Endothelial cell of umbilical vein (primary cell): ENCODE measurements at regions of chr20 and their contacts with region 1.

Region 1: GRCh38 chr20:50189681-50190582 is 698 bp upstream of the CEBPB start:
- DNase-seq: peak; percentile 71
- H3K4me3 ChIP-seq: peak overlapping the region; percentile 24 to 60 (median 42)
- H3K27ac ChIP-seq: no peak overlapping the region
- H3K4me1 ChIP-seq: peaks cover 12% of the 10 kb centered on the region
- H3K27me3 ChIP-seq: peaks cover 0 to 2% of the 10 kb centered on the region in 2 experiments
- CTCF ChIP-seq: peak; percentile 54 to 88
- POLR2A ChIP-seq: no peak

Region 2: GRCh38 chr20:50110141-50110925 is 79.6 kb before region 1 on chr20:
- CTCF ChIA-PET with region 1: no interaction called
- POLR2A ChIA-PET with region 1: no interaction called
- dilution Hi-C with region 1: no loop called
- intact Hi-C with region 1: no loop called
- DNase-seq: peak; percentile 83
- H3K4me3 ChIP-seq: no peak overlapping the region
- H3K27ac ChIP-seq: peak overlapping the region; percentile 84
- H3K4me1 ChIP-seq: peaks cover 67% of the 10 kb centered on the region
- H3K27me3 ChIP-seq: no peaks in the 10 kb centered on the region
- CTCF ChIP-seq: no peak
- POLR2A ChIP-seq: no peak

Region 3: GRCh38 chr20:50200482-50201104 is 10.7 kb after region 1 on chr20:
- CTCF ChIA-PET with region 1: no interaction called
- POLR2A ChIA-PET with region 1: no interaction called
- dilution Hi-C with region 1: no loop called
- intact Hi-C with region 1: no loop called
- DNase-seq: no peak
- H3K4me3 ChIP-seq: no peak overlapping the region
- H3K27ac ChIP-seq: no peak overlapping the region
- H3K4me1 ChIP-seq: no peaks in the 10 kb centered on the region
- H3K27me3 ChIP-seq: no peaks in the 10 kb centered on the region
- CTCF ChIP-seq: no peak
- POLR2A ChIP-seq: no peak

Region 4: DNA sequence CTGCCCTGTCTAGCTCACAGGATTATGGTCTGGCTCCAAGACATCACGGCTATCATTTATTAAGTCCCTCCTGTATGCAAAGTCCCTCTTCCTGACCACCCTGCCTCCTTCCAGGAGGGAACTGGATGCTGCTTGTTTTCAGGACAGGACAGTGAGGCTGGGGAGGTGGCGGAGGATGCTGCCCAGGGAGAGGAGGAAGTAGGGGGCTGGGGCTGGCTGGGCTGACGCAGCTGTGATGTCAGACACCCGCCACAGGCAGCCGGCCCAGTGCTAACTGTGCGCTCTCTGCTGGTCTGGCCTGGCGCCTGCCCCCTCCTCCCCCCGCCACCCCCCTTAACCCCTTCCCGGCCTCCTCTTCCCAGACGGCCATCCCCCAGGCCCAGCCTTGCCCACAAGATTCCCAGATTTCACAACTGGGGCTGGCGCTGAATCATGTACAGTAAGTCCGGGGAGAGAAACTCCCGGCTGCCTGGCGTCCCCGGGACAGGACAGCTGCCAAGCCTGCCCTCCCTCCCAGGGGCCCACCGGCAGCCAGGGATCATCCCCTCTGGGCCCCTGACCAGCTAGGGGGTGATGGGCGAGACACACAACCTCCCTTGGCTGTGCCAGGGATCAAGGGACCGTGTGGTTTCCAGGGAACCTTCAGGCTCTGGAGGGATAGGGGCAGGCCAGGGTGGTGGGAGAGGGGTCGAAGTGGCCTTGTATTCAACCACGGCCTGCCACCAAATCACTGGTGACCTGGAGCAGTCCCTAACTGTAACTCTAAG is 118.8 kb after region 1 on chr20:
- CTCF ChIA-PET with region 1: interaction called, 4 read pairs
- POLR2A ChIA-PET with region 1: no interaction called
- dilution Hi-C with region 1: no loop called
- intact Hi-C with region 1: loop called (anchors 2 kb)
- DNase-seq: peak; percentile 52
- H3K4me3 ChIP-seq: peak overlapping the region in 1 of 3 experiments; percentile 20
- H3K27ac ChIP-seq: peak overlapping the region; percentile 85
- H3K4me1 ChIP-seq: peaks cover 14% of the 10 kb centered on the region
- H3K27me3 ChIP-seq: no peaks in the 10 kb centered on the region
- CTCF ChIP-seq: peak in 1 of 2 donors; percentile 13
- POLR2A ChIP-seq: no peak

Region 5: GRCh38 chr20:50379049-50379990 is 189.4 kb after region 1 on chr20:
- CTCF ChIA-PET with region 1: interaction called, 3 read pairs
- POLR2A ChIA-PET with region 1: no interaction called
- dilution Hi-C with region 1: no loop called
- intact Hi-C with region 1: loop called (anchors 2 kb)
- DNase-seq: peak; percentile 78
- H3K4me3 ChIP-seq: no peak overlapping the region
- H3K27ac ChIP-seq: no peak overlapping the region
- H3K4me1 ChIP-seq: peaks cover 24% of the 10 kb centered on the region
- H3K27me3 ChIP-seq: peaks cover 0 to 5% of the 10 kb centered on the region in 2 experiments
- CTCF ChIP-seq: no peak
- POLR2A ChIP-seq: no peak

Region 6: DNA sequence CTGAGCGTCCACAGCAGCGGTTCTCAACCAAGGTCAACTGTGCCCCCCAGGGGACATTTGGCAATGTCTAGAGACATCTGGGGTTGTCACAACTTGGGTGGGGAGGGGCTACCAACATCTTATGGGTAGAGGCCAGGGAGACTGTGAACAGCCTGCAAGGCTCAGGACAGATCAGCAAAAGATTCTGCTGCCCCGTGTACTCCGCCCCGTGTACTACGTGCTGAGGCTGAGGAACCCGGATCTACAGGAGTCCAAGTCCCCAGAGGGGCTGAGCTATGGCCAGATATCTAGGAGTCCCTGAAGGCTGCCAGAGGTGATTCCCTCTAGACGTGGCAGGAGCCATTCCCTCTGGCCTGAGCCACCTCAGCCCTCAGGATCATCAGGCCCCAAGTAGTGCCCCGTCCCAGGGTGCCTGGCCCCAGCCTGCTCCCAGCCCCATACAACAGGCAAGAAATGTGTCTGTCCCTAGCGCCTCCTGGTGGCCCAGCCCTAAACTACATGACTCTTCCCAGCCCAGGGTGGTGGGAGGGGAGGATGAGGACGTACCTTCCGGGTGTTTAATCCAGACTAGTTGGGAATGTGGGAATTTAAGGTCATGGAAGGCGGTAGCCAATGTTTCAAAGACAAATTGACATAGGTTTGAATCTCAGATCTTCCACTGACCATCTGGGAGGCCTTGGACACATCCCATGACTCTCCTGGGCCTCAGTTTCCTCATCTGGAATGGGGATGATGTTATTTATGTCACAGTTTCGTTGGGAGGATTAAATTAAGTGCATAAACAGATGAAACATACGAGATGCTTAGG is 270.7 kb after region 1 on chr20:
- CTCF ChIA-PET with region 1: interaction called, 52 read pairs
- POLR2A ChIA-PET with region 1: no interaction called
- dilution Hi-C with region 1: no loop called
- intact Hi-C with region 1: loop called (anchors 1 kb)
- DNase-seq: peak; percentile 84
- H3K4me3 ChIP-seq: no peak overlapping the region
- H3K27ac ChIP-seq: no peak overlapping the region
- H3K4me1 ChIP-seq: no peaks in the 10 kb centered on the region
- H3K27me3 ChIP-seq: no peaks in the 10 kb centered on the region
- CTCF ChIP-seq: peak; percentile 88 to 90
- POLR2A ChIP-seq: no peak

Region 7: DNA sequence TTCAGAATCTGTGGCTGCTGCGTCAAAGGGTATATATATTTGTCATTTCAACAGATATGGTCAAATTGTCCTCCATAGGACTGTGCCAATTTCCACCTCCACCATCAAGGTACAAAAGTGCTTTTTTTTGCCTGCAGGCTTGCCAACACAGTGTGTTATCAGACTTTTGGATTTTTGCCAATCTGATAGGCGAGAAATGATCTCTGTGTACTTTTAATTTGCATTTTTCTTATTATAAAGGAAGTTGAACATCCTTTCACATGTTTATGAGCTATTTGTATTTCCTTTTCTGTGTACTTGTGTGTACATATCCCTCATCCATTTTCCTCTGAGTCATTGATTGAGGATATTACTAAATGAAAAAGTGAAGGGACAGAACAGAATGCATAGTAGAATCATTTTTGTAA is 281.3 kb after region 1 on chr20:
- CTCF ChIA-PET with region 1: interaction called, 52 read pairs
- POLR2A ChIA-PET with region 1: no interaction called
- dilution Hi-C with region 1: no loop called
- intact Hi-C with region 1: no loop called
- DNase-seq: peak; percentile 78
- H3K4me3 ChIP-seq: no peak overlapping the region
- H3K27ac ChIP-seq: peak overlapping the region; percentile 30
- H3K4me1 ChIP-seq: peaks cover 34% of the 10 kb centered on the region
- H3K27me3 ChIP-seq: no peaks in the 10 kb centered on the region
- CTCF ChIP-seq: no peak
- POLR2A ChIP-seq: no peak

Region 8: GRCh38 chr20:50744143-50744792 is 554.3 kb after region 1 on chr20:
- CTCF ChIA-PET with region 1: interaction called, 33 read pairs
- POLR2A ChIA-PET with region 1: no interaction called
- dilution Hi-C with region 1: no loop called
- intact Hi-C with region 1: loop called (anchors 2 kb)
- DNase-seq: peak; percentile 42
- H3K4me3 ChIP-seq: no peak overlapping the region
- H3K27ac ChIP-seq: no peak overlapping the region
- H3K4me1 ChIP-seq: peaks cover 9% of the 10 kb centered on the region
- H3K27me3 ChIP-seq: no peaks in the 10 kb centered on the region
- CTCF ChIP-seq: no peak
- POLR2A ChIP-seq: no peak